ENCODE measurements at regions of chr5 and their contacts with region 1.

Region 1: DNA sequence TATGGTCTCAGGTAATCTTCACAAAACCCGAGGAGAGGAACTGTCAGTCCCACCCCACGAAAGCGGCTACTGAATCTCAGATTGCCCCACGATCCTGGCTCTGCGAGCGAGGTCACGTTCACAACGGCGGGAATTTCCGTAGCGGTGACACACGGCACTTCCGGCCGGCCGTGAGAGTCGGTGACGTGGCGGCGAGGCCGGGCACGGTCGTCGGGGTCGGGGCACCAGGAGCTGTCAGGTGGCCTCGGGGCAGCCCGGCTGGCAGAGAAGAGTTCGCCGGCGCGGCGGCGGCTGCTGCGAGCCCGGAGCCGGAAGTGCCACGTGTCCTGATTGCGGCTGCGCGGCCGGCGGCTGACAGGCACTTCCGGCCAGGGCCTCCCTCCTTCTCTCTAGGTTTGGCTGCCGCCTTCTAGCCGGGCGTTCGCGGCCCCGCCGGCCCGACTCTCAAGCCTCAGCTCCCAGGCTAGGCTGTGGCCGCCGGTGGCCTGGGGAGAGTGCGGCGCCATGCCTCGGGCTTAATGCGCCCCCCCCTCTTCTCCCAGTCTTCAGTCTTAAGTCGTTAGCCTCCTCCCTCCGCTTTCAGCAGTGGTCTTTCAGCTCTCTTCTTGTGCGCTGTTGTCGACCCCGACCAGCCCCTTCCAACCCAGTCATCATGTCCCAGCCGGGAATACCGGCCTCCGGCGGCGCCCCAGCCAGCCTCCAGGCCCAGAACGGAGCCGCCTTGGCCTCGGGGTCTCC is at the start of gene SEC24A:
- DNase-seq: peak; percentile 97
- H3K4me3 Mint-ChIP-seq: peak within 1 kb of the TSS; percentile 94
- H3K27ac Mint-ChIP-seq: peak within 1 kb of the TSS; percentile 97
- H3K4me1 Mint-ChIP-seq: peaks cover 23% of the 10 kb centered on the region
- H3K27me3 Mint-ChIP-seq: no peaks in the 10 kb centered on the region
- total RNA-seq, gene SEC24A: 29.4 and 31.2 TPM in 2 replicates

Region 2: DNA sequence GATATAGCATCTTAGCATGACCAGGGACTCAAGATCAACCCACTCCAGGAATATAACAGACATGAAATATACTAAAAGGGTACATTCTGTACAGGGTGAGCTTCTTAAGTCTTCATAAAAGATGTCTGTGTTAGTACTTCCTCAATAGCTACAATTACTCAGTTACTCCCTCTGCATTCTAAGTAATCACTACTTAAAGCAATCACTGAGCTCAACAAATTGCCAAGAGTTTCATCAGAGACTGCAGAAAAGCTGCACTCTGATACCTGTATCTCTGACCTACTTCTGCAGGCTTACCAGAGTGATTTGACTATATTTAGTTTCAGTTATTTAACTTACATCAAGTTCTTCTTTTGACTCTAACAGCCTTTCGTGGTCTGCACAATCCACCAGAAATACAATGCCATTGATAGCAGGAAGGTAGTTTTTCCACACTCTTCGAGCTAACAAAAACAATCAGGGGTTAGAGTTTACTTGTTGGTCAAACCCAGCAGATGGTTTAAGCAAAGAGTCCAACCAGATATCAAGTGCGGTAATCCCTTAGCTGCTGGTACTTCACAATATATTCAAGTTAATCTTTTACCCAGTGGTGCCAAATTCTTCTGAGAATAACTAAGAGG is 39.3 kb before region 1 on chr5:
- intact Hi-C with region 1: loop called (anchors 1 kb)
- DNase-seq: peak; percentile 72
- H3K4me3 Mint-ChIP-seq: peak overlapping the region; percentile 76
- H3K27ac Mint-ChIP-seq: peak overlapping the region; percentile 95
- H3K4me1 Mint-ChIP-seq: peaks cover 51% of the 10 kb centered on the region
- H3K27me3 Mint-ChIP-seq: no peaks in the 10 kb centered on the region

Region 3: GRCh38 chr5:134637161-134637582 is 11.4 kb before region 1 on chr5:
- intact Hi-C with region 1: loop called (anchors 1 kb)
- DNase-seq: no peak
- H3K4me3 Mint-ChIP-seq: no peak overlapping the region
- H3K27ac Mint-ChIP-seq: no peak overlapping the region
- H3K4me1 Mint-ChIP-seq: peaks cover 6% of the 10 kb centered on the region
- H3K27me3 Mint-ChIP-seq: no peaks in the 10 kb centered on the region

Region 4: DNA sequence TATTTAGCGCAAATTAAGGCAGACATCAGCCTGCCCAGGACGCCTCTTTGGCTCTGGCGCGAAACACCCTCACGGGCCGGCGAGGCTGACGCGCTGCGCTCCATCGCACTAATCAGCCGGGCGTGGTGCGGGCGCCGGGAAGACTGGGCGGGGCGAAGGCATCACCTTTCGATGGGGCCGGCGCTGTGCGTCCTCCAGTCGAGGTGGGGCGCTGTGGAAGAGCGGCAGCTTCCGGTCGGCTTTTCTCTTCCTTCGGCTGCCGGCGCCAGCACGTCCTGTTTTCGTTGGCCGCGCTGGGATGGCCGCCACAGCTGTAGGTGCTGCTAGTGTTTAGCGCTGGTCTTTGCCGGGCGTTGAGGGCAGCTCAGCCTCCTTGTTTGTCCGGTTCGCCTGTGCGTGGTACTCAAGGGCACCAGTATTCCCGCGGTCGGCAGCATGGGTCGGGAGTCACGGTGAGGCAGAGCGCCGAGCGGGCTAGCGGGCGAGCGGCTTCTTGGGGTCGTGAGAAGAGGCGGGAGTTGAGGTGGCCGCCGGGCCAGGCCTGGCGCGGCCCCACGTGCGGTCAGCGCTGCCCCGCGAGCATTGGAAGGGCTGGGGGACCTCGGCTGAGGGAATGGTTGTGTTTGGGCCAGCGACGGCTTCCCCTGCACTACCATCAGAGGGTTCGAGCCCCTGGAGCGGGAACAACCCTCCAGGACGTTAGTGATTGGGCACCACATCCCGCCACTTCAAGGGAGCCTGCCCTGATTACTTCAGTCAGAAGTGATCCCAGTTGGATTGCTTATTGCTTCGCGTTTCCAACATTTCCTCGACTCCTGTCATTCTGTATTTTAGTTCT is 110.1 kb after region 1 on chr5 and contains the start of gene DDX46:
- intact Hi-C with region 1: loop called (anchors 2 kb)
- DNase-seq: peak; percentile 99
- H3K4me3 Mint-ChIP-seq: peak within 1 kb of the TSS; percentile 99
- H3K27ac Mint-ChIP-seq: peak within 1 kb of the TSS; percentile 95
- H3K4me1 Mint-ChIP-seq: peaks cover 31% of the 10 kb centered on the region
- H3K27me3 Mint-ChIP-seq: no peaks in the 10 kb centered on the region
- total RNA-seq, gene DDX46: 83.8 and 89.4 TPM in 2 replicates

Measured in activated CD4-positive, alpha-beta T cell treated with anti-CD3 and anti-CD28 coated beads, Interleukin-2, amount 10 ng/mL, durations not matched to agents 24 days and 14 days (primary cell).